Heart left ventricle (tissue), 16 donors: ENCODE measurements at regions of chr1 and their contacts with region 1.

Region 1: DNA sequence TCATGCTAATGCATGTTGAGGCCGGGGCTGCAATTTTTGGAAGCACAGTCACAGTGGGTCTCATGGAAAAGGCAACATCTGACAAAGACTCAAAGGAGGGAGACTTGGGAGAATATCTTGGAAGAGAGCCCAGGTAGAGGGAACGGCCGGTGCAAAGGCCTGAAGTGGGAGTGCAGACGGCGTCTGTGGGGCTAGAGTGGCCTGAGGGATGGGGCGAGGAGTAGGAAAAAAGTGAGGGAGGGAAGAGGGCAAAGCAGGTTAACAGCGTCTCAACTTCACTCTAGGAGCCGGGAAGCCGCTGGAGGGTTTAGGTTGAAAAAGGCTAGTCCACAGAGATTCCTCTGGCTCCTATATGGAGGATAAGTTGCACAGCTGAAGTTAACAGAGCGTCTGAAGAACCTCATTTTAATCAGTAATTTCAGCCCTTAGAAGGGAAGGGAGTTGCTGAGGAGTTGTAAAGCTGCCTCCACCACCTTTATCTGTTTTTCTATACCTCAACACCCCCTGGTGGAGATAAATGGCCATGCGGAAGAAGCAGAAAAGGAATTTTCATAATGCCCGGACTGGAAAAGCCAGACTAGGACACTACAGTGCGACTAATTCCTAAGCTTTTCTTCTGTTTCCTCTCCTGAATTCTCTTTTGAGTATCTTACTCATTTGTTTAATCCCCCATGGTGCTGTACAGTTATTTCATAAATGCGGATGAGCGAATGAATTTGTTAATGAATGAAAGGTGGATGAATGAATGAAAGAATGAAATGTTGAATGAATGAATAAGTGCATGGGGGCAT is 78.7 kb upstream of the ZNF281 start:
- DNase-seq: peak in 1 of 5 donors; percentile 25
- ATAC-seq: peak; percentile 33 to 62 (median 51)
- H3K4me3 ChIP-seq: no peak overlapping the region
- H3K27ac ChIP-seq: no peak overlapping the region
- H3K4me1 ChIP-seq: peaks cover 0 to 8% (median 0%) of the 10 kb centered on the region in 12 donors
- H3K27me3 ChIP-seq: peaks cover 0 to 13% (median 0%) of the 10 kb centered on the region in 9 donors
- CTCF ChIP-seq: peak; percentile 66 to 84 (median 76)
- POLR2A ChIP-seq: no peak

Region 2: GRCh38 chr1:199684686-199685273 is 803.8 kb before region 1 on chr1:
- intact Hi-C with region 1: loop called (anchors 1 to 5 kb)
- DNase-seq: peak in 1 of 5 donors; percentile 9
- ATAC-seq: peak; percentile 58 to 80 (median 69)
- H3K4me3 ChIP-seq: no peak overlapping the region
- H3K27ac ChIP-seq: no peak overlapping the region
- H3K4me1 ChIP-seq: no peaks in the 10 kb centered on the region
- H3K27me3 ChIP-seq: peaks cover 0 to 12% (median 0%) of the 10 kb centered on the region in 9 donors
- CTCF ChIP-seq: peak; percentile 68 to 84 (median 80)
- POLR2A ChIP-seq: no peak

Region 3: DNA sequence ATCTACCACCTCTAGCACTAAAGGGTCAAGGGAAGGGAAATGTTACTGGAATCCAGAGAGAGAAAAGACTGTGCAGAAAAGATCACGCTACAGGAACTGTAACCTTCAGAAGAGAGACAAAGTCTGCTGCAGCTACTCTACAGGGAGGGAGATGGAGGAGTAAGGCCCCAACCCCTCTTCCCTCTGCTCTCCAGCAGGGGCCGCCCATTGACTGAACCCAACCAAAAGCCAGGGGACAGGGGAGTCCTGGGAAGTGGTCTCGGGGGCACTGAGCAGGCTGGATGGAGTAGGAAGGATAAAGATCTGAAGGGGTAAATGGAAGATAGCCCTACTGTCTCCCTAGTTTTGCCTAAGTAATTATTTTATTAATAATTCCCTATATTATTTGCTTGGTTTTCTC is 533.9 kb before region 1 on chr1:
- intact Hi-C with region 1: loop called in 2 of 10 experiments (anchors 10 kb)
- DNase-seq: no peak
- ATAC-seq: peak in 1 of 4 donors; percentile 37
- H3K4me3 ChIP-seq: no peak overlapping the region
- H3K27ac ChIP-seq: no peak overlapping the region
- H3K4me1 ChIP-seq: no peaks in the 10 kb centered on the region
- H3K27me3 ChIP-seq: no peaks in the 10 kb centered on the region
- CTCF ChIP-seq: peak; percentile 14 to 50 (median 33)
- POLR2A ChIP-seq: no peak

Region 4: GRCh38 chr1:199982606-199983005 is 506.0 kb before region 1 on chr1:
- intact Hi-C with region 1: no loop called
- DNase-seq: no peak
- ATAC-seq: no peak
- H3K4me3 ChIP-seq: no peak overlapping the region
- H3K27ac ChIP-seq: no peak overlapping the region
- H3K4me1 ChIP-seq: peaks cover 0 to 5% (median 0%) of the 10 kb centered on the region in 12 donors
- H3K27me3 ChIP-seq: no peaks in the 10 kb centered on the region
- CTCF ChIP-seq: no peak
- POLR2A ChIP-seq: no peak

Region 5: GRCh38 chr1:200128944-200129885 is 359.4 kb before region 1 on chr1:
- intact Hi-C with region 1: loop called in 1 of 10 experiments (anchors 10 kb)
- DNase-seq: no peak
- ATAC-seq: no peak
- H3K4me3 ChIP-seq: no peak overlapping the region
- H3K27ac ChIP-seq: no peak overlapping the region
- H3K4me1 ChIP-seq: peaks cover 0 to 3% (median 0%) of the 10 kb centered on the region in 12 donors
- H3K27me3 ChIP-seq: peaks cover 0 to 3% (median 0%) of the 10 kb centered on the region in 9 donors
- CTCF ChIP-seq: no peak
- POLR2A ChIP-seq: no peak

Region 6: GRCh38 chr1:200139661-200140250 is 348.8 kb before region 1 on chr1:
- intact Hi-C with region 1: loop called in 1 of 10 experiments (anchors 5 kb)
- DNase-seq: no peak
- ATAC-seq: peak in 2 of 4 donors; percentile 65 to 73
- H3K4me3 ChIP-seq: no peak overlapping the region
- H3K27ac ChIP-seq: no peak overlapping the region
- H3K4me1 ChIP-seq: peaks cover 0 to 7% (median 0%) of the 10 kb centered on the region in 12 donors
- H3K27me3 ChIP-seq: no peaks in the 10 kb centered on the region
- CTCF ChIP-seq: peak; percentile 17 to 66 (median 52)
- POLR2A ChIP-seq: no peak

Region 7: GRCh38 chr1:200279810-200280411 is 208.7 kb before region 1 on chr1:
- intact Hi-C with region 1: loop called in 5 of 10 experiments (anchors 2 to 10 kb)
- DNase-seq: no peak
- ATAC-seq: no peak
- H3K4me3 ChIP-seq: no peak overlapping the region
- H3K27ac ChIP-seq: no peak overlapping the region
- H3K4me1 ChIP-seq: peaks cover 0 to 8% (median 0%) of the 10 kb centered on the region in 12 donors
- H3K27me3 ChIP-seq: no peaks in the 10 kb centered on the region
- CTCF ChIP-seq: peak in 11 of 12 donors; percentile 25 to 63 (median 53)
- POLR2A ChIP-seq: no peak

Region 8: GRCh38 chr1:200302192-200302920 is 186.2 kb before region 1 on chr1:
- intact Hi-C with region 1: loop called in 6 of 10 experiments (anchors 5 to 10 kb)
- DNase-seq: peak in 4 of 5 donors; percentile 19 to 66 (median 28)
- ATAC-seq: peak; percentile 44 to 74 (median 52)
- H3K4me3 ChIP-seq: peak overlapping the region; percentile 48 to 81 (median 70)
- H3K27ac ChIP-seq: peak overlapping the region in 4 of 12 donors; percentile 13 to 57 (median 26)
- H3K4me1 ChIP-seq: peaks cover 0 to 17% (median 3%) of the 10 kb centered on the region in 12 donors
- H3K27me3 ChIP-seq: no peaks in the 10 kb centered on the region
- CTCF ChIP-seq: peak in 4 of 12 donors; percentile 10 to 29 (median 18)
- POLR2A ChIP-seq: no peak

Region 9: GRCh38 chr1:200364091-200364759 is 124.3 kb before region 1 on chr1:
- intact Hi-C with region 1: no loop called
- DNase-seq: no peak
- ATAC-seq: no peak
- H3K4me3 ChIP-seq: no peak overlapping the region
- H3K27ac ChIP-seq: no peak overlapping the region
- H3K4me1 ChIP-seq: peaks cover 0 to 31% (median 0%) of the 10 kb centered on the region in 12 donors
- H3K27me3 ChIP-seq: no peaks in the 10 kb centered on the region
- CTCF ChIP-seq: no peak
- POLR2A ChIP-seq: no peak